ENCODE measurements at regions of chr17 and their contacts with region 1.

Region 1: GRCh38 chr17:17041571-17042380 is 481 bp upstream of the MPRIP start:
- DNase-seq: peak; percentile 100
- ATAC-seq: peak; percentile 97

Region 2: DNA sequence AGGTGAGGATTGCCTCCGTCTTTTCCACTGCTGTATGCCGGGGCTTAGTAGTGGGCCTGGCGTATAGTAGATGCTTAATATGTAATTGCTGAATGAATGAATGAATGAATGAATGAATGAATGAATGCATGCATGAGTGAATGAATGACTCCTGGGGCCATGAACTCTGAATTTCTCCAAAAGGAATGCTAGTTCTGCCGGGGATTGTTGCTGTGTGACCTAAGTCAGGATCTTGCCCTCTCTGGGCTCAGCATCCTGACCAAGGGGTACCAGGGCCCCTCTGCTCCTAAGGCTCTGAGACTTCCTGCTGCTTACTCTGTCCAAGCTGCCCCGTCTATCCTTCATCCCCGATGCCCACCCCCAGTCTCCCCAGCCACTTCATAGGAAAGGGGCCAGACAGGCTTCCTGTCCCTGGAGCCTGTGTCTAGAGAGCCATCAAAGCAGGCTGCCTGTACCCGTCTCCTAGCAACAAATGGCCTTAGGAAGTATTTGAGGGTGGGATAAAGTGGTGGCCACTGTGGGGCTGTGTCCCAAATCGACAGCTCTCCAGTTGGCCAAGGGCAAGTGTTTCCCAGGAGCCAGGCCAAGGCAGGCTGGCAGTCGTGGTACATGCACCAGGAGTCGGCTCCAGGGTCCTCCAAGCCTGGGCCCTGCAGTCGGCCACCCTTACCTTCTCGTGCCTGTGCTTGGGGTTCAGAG is 11.1 kb before region 1 on chr17:
- intact Hi-C with region 1: loop called (anchors 1 kb)
- DNase-seq: no peak
- ATAC-seq: no peak

Region 3: GRCh38 chr17:17075038-17075781 is 33.4 kb after region 1 on chr17:
- intact Hi-C with region 1: loop called (anchors 2 kb)
- DNase-seq: peak; percentile 70
- ATAC-seq: peak; percentile 27

Region 4: DNA sequence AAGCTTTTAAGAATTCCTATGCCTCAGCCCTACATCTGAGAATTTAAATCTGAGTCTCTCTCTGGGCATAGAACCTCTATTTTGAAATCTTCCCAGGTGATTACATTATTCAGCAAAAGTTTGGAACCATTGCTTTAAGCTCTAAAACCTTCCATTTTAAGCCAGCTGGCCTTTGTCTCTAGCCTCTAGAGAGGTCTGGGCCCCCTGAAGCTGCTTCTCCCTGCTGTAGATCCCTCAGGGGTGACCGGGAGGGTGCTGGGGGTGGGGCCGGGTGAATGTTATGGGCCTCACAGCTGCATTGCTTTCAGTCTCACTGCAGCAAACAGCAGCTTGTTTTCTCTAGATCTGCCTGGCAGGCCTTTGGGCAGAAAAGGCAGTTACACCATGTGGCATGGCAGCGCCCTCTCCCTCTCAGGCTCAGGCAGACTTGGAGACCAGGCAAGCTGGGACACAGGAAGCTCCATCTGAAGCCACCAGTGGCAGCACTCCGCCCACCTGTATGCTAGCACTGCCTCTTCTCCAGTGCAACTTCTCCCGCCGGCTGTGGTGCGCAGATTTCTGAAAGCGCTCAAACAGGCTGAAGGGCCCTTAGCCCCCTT is 66.8 kb after region 1 on chr17:
- intact Hi-C with region 1: loop called (anchors 5 kb)
- DNase-seq: peak; percentile 51
- ATAC-seq: no peak

Region 5: GRCh38 chr17:17120701-17121100 is 78.9 kb after region 1 on chr17:
- intact Hi-C with region 1: loop called (anchors 5 kb)
- DNase-seq: peak; percentile 31
- ATAC-seq: peak; percentile 20

Region 6: DNA sequence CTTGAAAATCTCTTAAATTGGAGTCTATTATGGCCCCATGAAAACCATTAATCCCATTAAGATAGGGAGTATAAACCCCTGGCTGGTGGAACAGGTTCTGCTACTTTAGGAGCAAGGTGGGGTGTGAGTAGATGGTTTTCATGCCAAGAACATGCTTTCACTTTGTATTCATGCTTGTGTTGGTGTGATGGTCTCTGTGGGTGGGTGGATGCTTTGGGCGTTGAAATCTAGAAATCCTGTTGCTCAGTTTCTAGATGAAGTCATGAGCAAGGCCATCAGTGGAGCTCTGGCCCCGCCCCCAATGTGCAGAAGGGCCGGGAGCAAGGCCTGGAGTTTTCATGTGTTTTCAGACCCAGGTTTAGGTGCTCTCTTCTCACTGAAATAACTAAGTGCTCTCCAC is 144.3 kb after region 1 on chr17:
- intact Hi-C with region 1: no loop called
- DNase-seq: no peak
- ATAC-seq: no peak